ENCODE measurements at regions of chr15 and their contacts with region 1.

Region 1: DNA sequence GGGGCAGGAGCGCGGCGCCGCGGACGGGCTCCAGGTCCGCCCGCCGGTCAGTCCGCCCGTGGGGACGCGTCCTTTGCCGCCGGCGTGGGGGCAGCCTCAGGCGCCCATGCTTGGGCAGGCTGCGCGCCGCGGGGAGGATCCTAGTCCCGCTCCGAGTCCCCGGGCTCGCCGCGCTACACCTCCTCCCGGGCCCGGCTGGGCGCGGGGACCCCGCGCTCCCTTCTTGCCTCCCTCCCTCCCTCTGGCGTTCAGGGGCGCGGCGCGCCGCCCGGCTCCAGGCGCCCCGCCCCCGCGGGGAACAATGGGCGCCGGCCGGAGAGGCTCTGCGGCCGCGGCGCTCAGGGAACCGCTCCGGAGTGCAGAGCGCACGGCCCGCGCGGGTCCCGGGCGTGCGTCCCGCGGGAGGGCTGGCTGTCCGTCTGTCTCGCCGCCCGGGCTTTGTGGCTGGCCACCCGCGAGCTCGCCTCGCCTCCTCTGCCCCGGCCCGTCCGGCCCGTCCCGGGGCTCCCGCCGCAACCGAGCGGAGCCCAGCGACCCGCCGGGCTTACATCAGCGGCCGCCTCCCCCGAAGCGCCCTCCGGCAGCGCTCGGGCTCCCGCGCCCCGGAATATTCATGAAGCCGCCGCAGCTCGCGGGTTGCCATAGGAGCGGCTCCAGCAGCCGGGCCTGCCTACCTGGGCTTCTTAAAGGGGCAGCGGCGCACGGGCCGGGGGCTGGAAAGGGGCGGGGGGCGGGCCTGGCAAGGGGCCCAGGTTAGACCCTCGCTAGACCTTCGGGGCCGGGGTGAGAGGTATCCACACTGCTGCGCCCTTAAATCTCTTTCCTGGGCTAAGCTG is at the start of gene HCN4:
- DNase-seq: no peak
- total RNA-seq, gene HCN4: 6.2 TPM

Region 2: GRCh38 chr15:72037321-72037720 is 1331.2 kb before region 1 on chr15:
- intact Hi-C with region 1: no loop called
- DNase-seq: no peak

Region 3: GRCh38 chr15:73518180-73518862 is 149.8 kb after region 1 on chr15:
- intact Hi-C with region 1: loop called (anchors 10 kb)
- DNase-seq: no peak

Measured in cardiac septum (tissue), 1 donor.